ENCODE measurements at regions of chrX and their contacts with region 1.

Region 1: DNA sequence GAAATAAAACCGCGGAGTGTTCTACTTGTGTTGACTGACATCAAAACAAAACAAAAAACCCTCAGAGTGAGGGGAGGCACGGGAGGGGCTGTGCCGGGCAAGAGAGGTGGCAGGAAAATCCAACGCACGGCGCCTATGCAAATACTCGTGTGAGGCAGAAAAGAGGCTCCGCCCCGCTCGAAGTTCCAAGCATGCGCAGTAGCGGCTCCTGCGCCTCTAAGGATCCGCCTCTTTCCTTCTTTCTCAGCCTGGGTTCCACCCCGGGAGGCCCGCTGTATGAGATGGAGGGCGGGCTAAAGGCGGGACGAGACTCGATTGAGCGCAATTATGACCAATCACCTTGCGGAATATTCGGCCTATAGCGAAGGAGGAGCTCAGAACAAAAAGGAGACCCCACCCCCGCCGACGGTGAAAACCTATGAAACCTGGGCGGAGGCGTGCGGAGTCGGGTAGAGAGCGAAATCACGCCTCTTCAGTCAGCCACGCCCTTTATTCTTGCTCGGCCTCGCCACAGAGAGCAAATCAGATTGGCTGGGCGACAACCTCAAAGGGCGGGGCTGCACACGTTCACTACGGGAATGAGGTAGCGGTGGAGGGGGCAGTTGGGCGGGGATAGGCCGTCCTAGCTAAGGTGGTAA is 720 bp upstream of the CDK16 start:
- DNase-seq: peak; percentile 98
- ATAC-seq: peak; percentile 86
- H3K4me3 ChIP-seq: peak overlapping the region; percentile 54
- H3K27ac ChIP-seq: peak overlapping the region; percentile 94
- H3K4me1 ChIP-seq: peaks cover 10% of the 10 kb centered on the region; the same call in 1 of the 2 replicates
- H3K27me3 ChIP-seq: no peaks in the 10 kb centered on the region
- CTCF ChIP-seq: no peak
- POLR2A ChIP-seq: no peak; the same call in 1 of the 2 replicates
- RAD21 ChIP-seq: no peak

Region 2: DNA sequence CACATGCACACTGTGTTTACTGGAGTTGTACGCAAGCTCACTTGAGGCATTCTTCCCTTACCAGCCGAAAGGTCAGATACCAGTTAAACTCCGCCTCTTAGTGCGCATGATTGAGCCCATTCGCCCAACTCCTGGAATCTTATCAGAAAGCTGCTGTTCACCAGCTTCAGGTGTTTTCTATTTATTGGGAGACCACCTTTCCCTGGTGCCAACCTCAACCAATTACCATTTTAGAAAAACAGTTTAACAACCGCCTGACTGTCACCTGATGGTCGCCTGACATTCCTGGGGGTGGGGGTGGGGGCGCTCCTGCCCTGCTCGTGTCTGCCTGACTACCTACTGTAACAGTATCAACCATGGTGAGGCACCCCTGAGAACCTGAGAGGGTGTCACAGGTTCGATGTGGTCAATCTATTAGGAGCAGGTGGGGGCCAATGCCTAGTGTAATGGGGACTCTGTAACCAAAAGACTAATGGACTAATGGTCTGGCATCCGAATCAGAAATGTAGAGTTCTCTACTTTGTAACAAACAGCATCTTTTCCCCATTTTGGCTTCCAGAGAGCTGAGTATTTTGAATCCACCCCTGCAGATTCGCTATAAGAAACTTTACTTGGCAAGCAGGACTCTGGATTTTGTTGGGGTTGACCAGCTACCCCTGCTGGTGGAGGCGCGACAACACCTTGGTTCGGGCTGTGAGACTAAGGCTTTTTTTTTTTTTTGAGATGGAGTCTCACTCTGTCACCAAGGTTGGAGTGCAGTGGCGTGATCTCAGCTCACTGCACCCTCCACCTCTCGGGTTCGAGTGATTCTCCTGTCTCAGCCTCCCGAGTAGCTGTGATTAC is 94.4 kb after region 1 on chrX:
- CTCF ChIA-PET with region 1: no interaction called
- POLR2A ChIA-PET with region 1: no interaction called
- dilution Hi-C with region 1: no loop called
- in situ Hi-C with region 1: no loop called
- intact Hi-C with region 1: loop called (anchors 1 kb)
- DNase-seq: peak; percentile 63
- ATAC-seq: peak; percentile 78
- H3K4me3 ChIP-seq: no peak overlapping the region
- H3K27ac ChIP-seq: no peak overlapping the region
- H3K4me1 ChIP-seq: no peaks in the 10 kb centered on the region
- H3K27me3 ChIP-seq: peaks cover 5% of the 10 kb centered on the region; the same call in 1 of the 2 replicates
- CTCF ChIP-seq: peak; percentile 57
- POLR2A ChIP-seq: no peak
- RAD21 ChIP-seq: peak; percentile 55